ENCODE measurements at regions of chr3 and their contacts with region 1.

Region 1: DNA sequence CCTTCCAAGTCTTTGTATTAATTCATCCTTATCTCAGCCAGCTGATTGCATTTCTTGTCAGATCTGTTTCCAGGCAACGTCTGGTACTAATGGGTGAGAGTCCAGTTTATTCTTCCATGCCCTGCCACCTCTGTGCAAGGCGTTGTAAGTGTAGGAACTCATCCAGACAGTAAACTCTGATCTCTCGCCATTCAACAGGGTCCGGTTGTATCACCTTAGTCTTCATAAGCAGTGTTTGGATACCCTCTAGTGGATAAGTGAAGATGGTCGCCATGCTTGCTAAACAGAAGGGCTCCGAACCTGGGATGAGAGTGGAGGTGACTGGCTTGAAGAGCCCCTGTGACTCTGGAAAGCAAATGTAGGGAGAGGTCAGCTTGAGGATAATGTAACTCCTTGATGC is 51.6 kb upstream of the CMTM7 start:
- DNase-seq: no peak
- ATAC-seq: peak in 3 of 4 donors; percentile 43 to 66 (median 62)
- H3K4me3 ChIP-seq: no peak overlapping the region
- H3K27ac ChIP-seq: no peak overlapping the region
- H3K4me1 ChIP-seq: no peaks in the 10 kb centered on the region
- H3K27me3 ChIP-seq: no peaks in the 10 kb centered on the region
- CTCF ChIP-seq: peak; percentile 40

Region 2: GRCh38 chr3:32177702-32178198 is 162.3 kb before region 1 on chr3:
- intact Hi-C with region 1: loop called (anchors 2 to 10 kb)
- DNase-seq: no peak
- ATAC-seq: peak; percentile 42 to 87 (median 80)
- H3K4me3 ChIP-seq: no peak overlapping the region
- H3K27ac ChIP-seq: no peak overlapping the region
- H3K4me1 ChIP-seq: no peaks in the 10 kb centered on the region
- H3K27me3 ChIP-seq: no peaks in the 10 kb centered on the region
- CTCF ChIP-seq: peak; percentile 57